Psoas muscle (tissue), 8 donors: ENCODE measurements at regions of chr16 and their contacts with region 1.

Region 1: GRCh38 chr16:50665128-50665878 is 15.8 kb downstream of the SNX20 start:
- DNase-seq: peak; percentile 74 to 85
- ATAC-seq: peak; percentile 63 to 88 (median 76)
- H3K4me3 ChIP-seq: peak overlapping the region; percentile 68
- H3K27ac ChIP-seq: peak overlapping the region; percentile 60
- H3K4me1 ChIP-seq: peaks cover 16% of the 10 kb centered on the region
- H3K27me3 ChIP-seq: no peaks in the 10 kb centered on the region
- CTCF ChIP-seq: peak; percentile 88

Region 2: DNA sequence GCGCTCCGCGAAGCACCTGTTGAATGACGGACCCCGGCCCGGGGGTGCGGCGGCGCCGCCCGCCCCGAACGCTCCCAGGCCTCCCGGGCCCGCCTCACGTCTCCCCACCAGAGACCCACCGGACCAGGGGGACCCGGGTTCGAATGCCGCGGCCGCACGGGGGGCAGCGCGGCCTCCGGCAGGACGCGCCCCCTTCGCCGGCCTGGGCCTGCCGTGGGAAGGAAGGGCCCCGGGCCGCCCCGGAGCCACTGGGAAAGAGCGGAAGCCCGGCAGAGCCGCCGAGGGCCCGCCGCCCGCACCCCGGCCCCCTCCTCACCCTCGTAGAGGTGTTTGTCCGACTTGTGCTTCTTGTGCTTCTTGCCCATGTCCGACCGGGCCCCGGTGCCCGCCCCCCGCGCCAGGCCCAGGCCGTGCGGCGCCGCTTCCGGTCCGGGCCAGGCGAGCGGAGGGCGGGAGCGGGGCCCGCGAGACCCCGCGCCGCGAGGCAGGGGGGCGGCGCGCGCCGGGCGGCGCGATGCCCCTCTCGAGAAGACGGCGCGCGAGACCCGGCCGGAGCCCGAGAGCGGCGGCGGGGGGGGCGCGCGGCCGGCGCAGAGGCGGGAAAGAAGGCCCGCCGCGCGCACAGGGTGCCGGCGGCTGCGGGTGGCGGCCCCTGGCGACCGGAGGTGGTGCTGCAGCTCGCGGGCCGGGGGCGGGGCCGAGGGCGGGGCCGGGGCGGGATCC is 296.7 kb before region 1 on chr16 and contains the start of gene BRD7:
- intact Hi-C with region 1: loop called (anchors 5 to 10 kb)
- DNase-seq: peak; percentile 69 to 80
- ATAC-seq: peak; percentile 81 to 90 (median 84)
- H3K4me3 ChIP-seq: peak within 1 kb of the TSS; percentile 94
- H3K27ac ChIP-seq: peak within 1 kb of the TSS; percentile 82
- H3K4me1 ChIP-seq: peaks cover 22% of the 10 kb centered on the region
- H3K27me3 ChIP-seq: no peaks in the 10 kb centered on the region
- CTCF ChIP-seq: peak; percentile 77
- total RNA-seq, gene BRD7: 47.5 to 77.1 (median 52.4) TPM

Region 3: DNA sequence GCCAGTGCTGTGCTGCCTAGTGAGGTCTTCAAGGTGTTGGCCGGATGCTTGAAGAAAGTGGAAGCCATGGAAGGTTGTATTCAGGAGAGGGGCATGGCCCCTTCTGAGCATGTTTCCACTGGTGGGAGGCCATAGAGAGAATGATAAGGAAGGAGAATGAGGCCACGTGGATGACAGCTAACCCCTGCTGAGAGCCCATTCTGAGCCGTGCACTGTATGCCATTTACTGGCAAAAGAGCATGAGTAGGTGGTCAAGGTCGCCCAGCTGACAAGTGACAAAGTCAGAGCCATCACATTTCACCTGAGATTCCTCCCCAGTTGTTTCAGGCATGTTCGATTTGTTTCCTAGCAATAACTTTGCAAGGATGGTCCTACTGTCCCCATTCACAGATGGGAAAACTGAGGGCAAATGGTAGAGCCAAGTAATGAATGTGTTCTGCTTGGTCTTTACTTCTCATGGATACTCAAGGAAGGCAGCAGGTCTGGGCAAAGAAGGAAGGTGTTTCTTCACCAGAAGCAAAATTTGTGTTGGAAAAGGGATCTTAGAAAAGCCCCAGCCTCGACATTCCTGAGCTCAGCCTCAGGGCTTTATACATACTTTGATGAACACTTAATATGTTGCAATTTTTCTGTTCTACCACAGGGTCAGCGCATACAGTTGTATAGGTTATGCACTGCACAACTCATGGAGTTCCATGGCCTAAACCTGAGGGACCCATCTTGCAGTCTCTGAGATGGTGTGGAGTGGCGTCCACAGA is 127.6 kb before region 1 on chr16:
- intact Hi-C with region 1: no loop called
- DNase-seq: no peak
- ATAC-seq: no peak
- H3K4me3 ChIP-seq: no peak overlapping the region
- H3K27ac ChIP-seq: no peak overlapping the region
- H3K4me1 ChIP-seq: no peaks in the 10 kb centered on the region
- H3K27me3 ChIP-seq: peaks cover 0 to 4% (median 0%) of the 10 kb centered on the region in 3 donors
- CTCF ChIP-seq: no peak

Region 4: DNA sequence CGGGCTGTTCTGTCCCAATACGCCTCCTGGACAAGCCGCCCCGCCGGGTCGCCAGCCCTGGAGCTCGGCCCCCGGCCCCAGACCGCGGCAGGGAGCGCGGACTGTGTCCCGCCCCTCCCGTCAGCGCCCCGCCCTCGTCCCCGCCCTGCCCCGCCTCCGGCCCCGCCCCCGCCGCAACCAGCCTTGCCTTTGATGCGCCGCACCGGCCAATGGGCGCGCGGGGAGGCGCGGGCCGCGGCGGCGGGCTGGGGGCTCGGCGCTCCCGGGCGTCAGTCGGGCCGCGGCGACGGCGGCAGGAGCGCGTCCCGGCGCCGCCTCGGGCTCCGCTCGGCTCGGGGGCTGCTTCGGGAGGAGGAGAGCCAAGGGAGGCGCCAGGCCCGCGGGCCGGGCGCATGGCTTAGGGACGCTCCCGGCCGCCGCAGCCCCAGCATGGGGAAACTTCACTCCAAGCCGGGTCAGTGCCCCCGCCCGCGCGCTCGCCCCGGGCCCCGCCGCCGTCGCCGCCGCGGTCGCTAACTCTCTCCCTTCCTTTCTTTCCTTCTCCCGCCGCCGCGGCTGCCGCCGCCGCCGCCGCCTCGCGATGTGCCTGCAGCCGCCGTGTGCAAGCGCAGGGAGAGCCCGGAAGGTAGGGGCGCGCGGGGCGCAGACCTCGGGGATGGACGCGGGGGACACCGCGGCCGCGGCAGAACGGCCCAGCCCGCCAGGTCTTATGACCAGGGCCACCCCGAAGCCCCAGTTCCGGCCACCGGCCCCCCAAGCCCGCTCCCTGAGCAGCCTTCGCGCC is 117.0 kb before region 1 on chr16 and contains the start of gene NKD1:
- intact Hi-C with region 1: loop called in 1 of 2 experiments (anchors 5 kb)
- DNase-seq: peak; percentile 75 to 79
- ATAC-seq: peak; percentile 87 to 96 (median 92)
- H3K4me3 ChIP-seq: peak within 1 kb of the TSS; percentile 74
- H3K27ac ChIP-seq: no peak within 1 kb of the TSS
- H3K4me1 ChIP-seq: no peaks in the 10 kb centered on the region
- H3K27me3 ChIP-seq: peaks cover 0 to 30% (median 4%) of the 10 kb centered on the region in 3 donors
- CTCF ChIP-seq: no peak
- total RNA-seq, gene NKD1: 0.22 to 0.45 (median 0.34) TPM

Region 5: GRCh38 chr16:50613281-50613963 is 51.9 kb before region 1 on chr16:
- intact Hi-C with region 1: no loop called
- DNase-seq: no peak
- ATAC-seq: no peak
- H3K4me3 ChIP-seq: no peak overlapping the region
- H3K27ac ChIP-seq: no peak overlapping the region
- H3K4me1 ChIP-seq: peaks cover 15% of the 10 kb centered on the region
- H3K27me3 ChIP-seq: no peaks in the 10 kb centered on the region
- CTCF ChIP-seq: no peak

Region 6: DNA sequence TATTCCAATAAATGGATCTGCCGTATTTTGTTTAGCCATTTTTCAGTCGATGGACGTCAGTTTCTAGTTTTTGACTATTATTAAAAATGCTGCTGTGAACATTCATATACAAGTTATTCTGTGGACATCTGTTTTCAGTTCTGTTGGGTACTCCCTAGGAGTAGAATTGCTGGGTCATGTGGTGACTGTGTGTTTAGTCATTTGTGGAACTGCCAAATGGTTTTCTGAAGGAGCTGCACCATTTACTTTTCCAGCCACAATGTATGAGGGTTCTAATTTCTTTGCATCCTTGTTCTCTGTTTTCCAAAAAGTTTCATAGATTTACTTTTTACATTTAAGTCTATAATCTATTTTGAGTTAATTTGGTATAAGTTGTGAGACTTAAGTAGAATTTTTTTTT is 106.1 kb after region 1 on chr16:
- intact Hi-C with region 1: no loop called
- DNase-seq: no peak
- ATAC-seq: no peak
- H3K4me3 ChIP-seq: no peak overlapping the region
- H3K27ac ChIP-seq: no peak overlapping the region
- H3K4me1 ChIP-seq: peaks cover 7% of the 10 kb centered on the region
- H3K27me3 ChIP-seq: no peaks in the 10 kb centered on the region
- CTCF ChIP-seq: no peak

Region 7: DNA sequence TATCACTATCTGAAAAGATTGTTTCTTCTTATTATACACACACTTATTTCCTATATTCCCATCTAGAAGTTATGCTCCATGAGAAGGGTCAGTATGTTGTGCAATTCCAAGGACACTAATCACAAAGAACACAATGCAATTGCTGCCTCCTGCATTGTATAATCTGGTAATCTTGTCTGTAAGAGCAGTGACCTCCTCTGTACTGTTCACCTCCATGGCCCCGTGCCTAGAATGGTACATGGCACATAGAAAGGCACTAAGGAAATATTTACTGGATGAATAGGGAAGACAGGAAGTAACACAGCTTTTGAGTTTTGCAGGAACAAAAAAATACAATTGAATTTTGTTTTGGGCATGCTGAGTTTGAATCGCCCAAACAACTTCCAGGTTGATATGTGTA is 700.4 kb after region 1 on chr16:
- intact Hi-C with region 1: no loop called
- DNase-seq: no peak
- ATAC-seq: no peak
- H3K4me3 ChIP-seq: no peak overlapping the region
- H3K27ac ChIP-seq: no peak overlapping the region
- H3K4me1 ChIP-seq: no peaks in the 10 kb centered on the region
- H3K27me3 ChIP-seq: no peaks in the 10 kb centered on the region
- CTCF ChIP-seq: no peak